ENCODE measurements at regions of chr11 and their contacts with region 1.

Region 1: GRCh38 chr11:73376160-73376802 is at the start of gene RELT:
- DNase-seq: peak; percentile 89 to 95 (median 95)
- H3K4me3 ChIP-seq: peak within 1 kb of the TSS; percentile 59 to 96 (median 78)
- H3K27ac ChIP-seq: peak within 1 kb of the TSS; percentile 78 to 90
- H3K4me1 ChIP-seq: peaks cover 9 to 74% (median 68%) of the 10 kb centered on the region in 4 experiments
- H3K27me3 ChIP-seq: no peaks in the 10 kb centered on the region

Region 2: DNA sequence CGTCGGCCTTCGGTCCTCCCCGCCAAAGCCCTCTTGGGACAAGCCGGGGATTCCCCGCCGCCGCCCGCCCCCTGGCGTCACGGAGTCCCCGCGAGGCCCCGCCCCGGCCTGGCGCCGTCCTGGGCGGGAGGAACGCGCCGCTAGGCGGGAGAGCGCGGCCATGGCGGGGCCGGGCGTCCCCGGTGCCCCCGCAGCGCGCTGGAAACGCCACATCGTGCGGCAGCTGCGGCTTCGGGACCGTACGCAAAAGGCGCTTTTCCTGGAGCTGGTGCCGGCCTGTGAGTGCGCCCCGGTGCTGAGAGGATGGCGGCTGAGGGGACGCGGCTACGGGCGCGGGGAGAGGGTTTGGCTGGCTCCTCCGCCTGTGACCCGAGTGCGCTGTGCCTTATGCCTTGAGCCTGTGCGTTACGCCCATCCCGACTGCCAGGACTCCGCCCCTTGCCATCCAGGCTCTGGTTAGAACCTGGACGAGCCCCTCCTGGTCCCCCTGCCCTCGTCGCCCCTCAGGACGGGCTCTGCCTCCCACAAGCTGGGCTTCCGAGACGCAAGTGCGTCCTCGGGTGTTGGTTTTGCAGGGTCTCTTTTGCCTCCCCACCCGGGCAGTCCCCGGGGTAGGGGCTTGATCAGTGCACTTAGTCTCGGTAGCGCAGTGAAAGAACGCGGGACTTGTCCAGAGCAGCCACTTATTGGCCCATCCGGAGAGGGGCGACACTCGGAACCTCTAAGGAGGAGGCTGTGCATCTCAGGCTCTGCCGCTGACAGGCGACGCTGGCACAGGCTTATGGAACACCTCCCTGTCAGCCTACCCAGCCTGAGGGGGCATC is 561.8 kb before region 1 on chr11 and contains the start of gene ATG16L2:
- CTCF ChIA-PET with region 1: no interaction called
- POLR2A ChIA-PET with region 1: no interaction called
- DNase-seq: peak; percentile 85 to 92 (median 89)
- H3K4me3 ChIP-seq: peak within 1 kb of the TSS; percentile 80 to 98 (median 88)
- H3K27ac ChIP-seq: peak within 1 kb of the TSS; percentile 97 to 99
- H3K4me1 ChIP-seq: peaks cover 9 to 64% (median 51%) of the 10 kb centered on the region in 4 experiments
- H3K27me3 ChIP-seq: no peaks in the 10 kb centered on the region

Region 3: GRCh38 chr11:73360336-73361013 is 15.8 kb before region 1 on chr11:
- CTCF ChIA-PET with region 1: interaction called, 207 read pairs
- POLR2A ChIA-PET with region 1: no interaction called
- DNase-seq: peak in 1 of 3 donors; percentile 49
- H3K4me3 ChIP-seq: no peak overlapping the region
- H3K27ac ChIP-seq: no peak overlapping the region
- H3K4me1 ChIP-seq: no peaks in the 10 kb centered on the region
- H3K27me3 ChIP-seq: no peaks in the 10 kb centered on the region

Region 4: DNA sequence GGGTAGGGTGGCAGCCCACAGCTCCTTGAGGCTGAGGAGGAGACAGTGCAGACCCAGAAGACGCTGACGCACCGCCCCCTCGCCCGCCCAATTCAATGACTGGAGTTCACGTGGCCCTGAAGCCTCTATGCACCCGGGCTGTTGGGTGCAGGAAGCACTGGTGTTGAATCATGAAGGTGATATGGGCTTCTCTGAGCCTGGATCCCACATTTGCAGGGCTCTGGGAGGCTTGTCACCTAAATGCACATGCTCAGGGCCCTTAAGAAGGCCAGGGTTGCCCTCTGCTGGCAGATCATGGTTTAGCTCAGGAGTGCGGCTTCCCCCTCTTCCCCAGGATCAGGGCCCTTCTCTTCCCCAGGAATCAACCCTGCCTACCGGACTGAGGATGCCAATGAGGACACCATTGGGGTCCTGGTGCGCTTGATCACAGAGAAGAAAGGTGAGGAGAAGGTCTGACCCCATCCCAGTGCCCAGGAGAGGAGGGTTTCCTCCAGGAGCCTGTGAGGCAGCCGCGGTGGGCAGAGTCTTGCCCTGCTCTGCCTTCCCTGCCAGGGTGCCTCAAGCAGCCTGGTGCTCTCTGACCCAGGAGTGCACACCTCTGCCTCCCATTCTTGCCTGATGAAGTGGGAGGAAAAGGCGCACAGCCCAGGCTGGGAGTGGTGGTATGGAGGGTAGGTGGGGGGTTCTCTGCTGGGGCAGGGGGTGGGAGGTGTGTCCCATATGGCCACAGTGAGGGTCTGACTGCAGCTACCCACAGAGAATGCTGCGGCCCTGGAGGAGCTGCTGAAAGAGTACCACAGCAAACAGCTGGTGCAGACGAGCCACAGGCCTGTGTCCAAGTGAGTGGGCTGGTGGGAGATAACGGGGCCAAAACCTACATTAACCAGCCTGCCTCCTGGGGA is 17.4 kb after region 1 on chr11:
- CTCF ChIA-PET with region 1: interaction called, 28 read pairs
- POLR2A ChIA-PET with region 1: interaction called, 18 read pairs
- DNase-seq: peak; percentile 64 to 84 (median 78)
- H3K4me3 ChIP-seq: no peak overlapping the region
- H3K27ac ChIP-seq: no peak overlapping the region
- H3K4me1 ChIP-seq: peaks cover 0 to 37% (median 22%) of the 10 kb centered on the region in 4 experiments
- H3K27me3 ChIP-seq: no peaks in the 10 kb centered on the region

Region 5: GRCh38 chr11:73439002-73439843 is 62.9 kb after region 1 on chr11:
- CTCF ChIA-PET with region 1: no interaction called
- POLR2A ChIA-PET with region 1: no interaction called
- DNase-seq: no peak
- H3K4me3 ChIP-seq: no peak overlapping the region
- H3K27ac ChIP-seq: no peak overlapping the region
- H3K4me1 ChIP-seq: no peaks in the 10 kb centered on the region
- H3K27me3 ChIP-seq: no peaks in the 10 kb centered on the region

Region 6: GRCh38 chr11:73458201-73458600 is 81.9 kb after region 1 on chr11:
- CTCF ChIA-PET with region 1: no interaction called
- POLR2A ChIA-PET with region 1: no interaction called
- DNase-seq: no peak
- H3K4me3 ChIP-seq: no peak overlapping the region
- H3K27ac ChIP-seq: no peak overlapping the region
- H3K4me1 ChIP-seq: peaks cover 7 to 22% (median 13%) of the 10 kb centered on the region in 4 experiments
- H3K27me3 ChIP-seq: no peaks in the 10 kb centered on the region